WTC11 (cell line): ENCODE measurements at regions of chr11 and their contacts with region 1.

Region 1: DNA sequence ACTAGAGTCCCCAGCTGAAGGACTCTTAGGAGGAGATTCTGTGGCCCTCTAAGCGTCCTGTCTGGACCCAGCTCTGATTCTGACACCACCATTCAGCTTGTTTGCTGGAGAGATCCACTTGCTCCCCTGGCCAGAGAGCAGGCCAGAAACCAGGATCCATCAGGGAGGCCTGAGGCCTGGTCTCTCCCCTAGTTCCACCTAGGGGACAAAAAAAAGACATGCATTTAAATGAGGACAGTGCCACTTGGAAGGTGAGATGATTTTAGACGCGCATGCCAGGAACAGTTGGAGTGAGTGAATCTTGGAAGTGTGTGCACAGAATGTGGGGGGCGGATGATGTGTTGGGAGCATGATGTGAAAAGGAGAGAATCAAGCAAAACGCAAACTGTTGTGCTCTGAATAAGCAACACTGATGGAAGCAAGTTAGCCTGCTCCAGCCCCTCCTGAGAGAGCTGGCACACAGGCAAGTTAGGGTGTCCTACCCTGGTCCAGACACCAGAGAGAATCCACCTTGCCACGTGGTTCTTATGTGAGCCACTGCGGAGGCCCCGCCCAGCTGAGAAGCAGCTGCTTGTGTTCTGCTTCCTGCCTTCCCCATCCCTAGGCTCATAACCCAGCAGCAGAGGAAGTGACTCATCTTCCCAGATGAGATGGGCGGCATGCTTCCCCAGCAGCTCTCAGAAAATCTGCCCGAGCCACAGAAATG is 8.0 kb upstream of the SLCO2B1 start:
- DNase-seq: no peak
- ATAC-seq: peak; percentile 60
- H3K4me3 Mint-ChIP-seq: no peak overlapping the region
- H3K27ac Mint-ChIP-seq: no peak overlapping the region
- H3K4me1 Mint-ChIP-seq: peaks cover 8% of the 10 kb centered on the region
- H3K27me3 Mint-ChIP-seq: peaks cover 6% of the 10 kb centered on the region
- CTCF ChIP-seq: no peak

Region 2: DNA sequence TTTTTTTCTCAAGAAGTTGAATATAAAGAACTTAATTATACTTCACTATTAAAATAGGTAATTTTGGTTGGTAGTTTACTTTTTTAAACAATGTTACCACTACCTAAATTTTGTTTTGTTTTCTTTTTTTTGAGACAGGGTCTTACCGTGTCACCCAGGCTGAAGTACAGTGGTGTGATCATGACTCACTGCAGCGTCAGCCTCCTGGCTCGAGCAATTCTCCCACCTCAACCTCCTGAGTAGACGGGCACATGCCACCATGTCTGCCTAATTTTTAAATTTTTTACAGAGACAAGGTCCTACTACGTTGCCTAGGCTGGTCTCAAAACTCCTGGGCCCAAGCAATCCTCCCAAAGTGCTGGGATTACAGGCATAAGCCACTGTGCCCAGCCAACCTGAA is 176.2 kb before region 1 on chr11:
- CTCF ChIA-PET with region 1: no interaction called
- POLR2A ChIA-PET with region 1: no interaction called
- DNase-seq: no peak
- ATAC-seq: no peak
- H3K4me3 Mint-ChIP-seq: no peak overlapping the region
- H3K27ac Mint-ChIP-seq: no peak overlapping the region
- H3K4me1 Mint-ChIP-seq: 0 out of 2 replicates have a peak, but pooled peaks cover 3% of the 10 kb centered on the region
- H3K27me3 Mint-ChIP-seq: no peaks in the 10 kb centered on the region
- CTCF ChIP-seq: no peak

Region 3: GRCh38 chr11:75022759-75023396 is 120.0 kb before region 1 on chr11:
- CTCF ChIA-PET with region 1: interaction called, 54 read pairs
- POLR2A ChIA-PET with region 1: no interaction called
- DNase-seq: peak; percentile 91
- ATAC-seq: peak; percentile 99
- H3K4me3 Mint-ChIP-seq: no peak overlapping the region
- H3K27ac Mint-ChIP-seq: no peak overlapping the region
- H3K4me1 Mint-ChIP-seq: no peaks in the 10 kb centered on the region
- H3K27me3 Mint-ChIP-seq: peaks cover 4% of the 10 kb centered on the region
- CTCF ChIP-seq: peak; percentile 97

Region 4: GRCh38 chr11:75174781-75175370 is 32.0 kb after region 1 on chr11:
- CTCF ChIA-PET with region 1: interaction called, 16 read pairs
- POLR2A ChIA-PET with region 1: no interaction called
- DNase-seq: no peak
- ATAC-seq: no peak; the same call in 1 of the 2 replicates
- H3K4me3 Mint-ChIP-seq: no peak overlapping the region
- H3K27ac Mint-ChIP-seq: no peak overlapping the region
- H3K4me1 Mint-ChIP-seq: peaks cover 11% of the 10 kb centered on the region
- H3K27me3 Mint-ChIP-seq: no peaks in the 10 kb centered on the region
- CTCF ChIP-seq: no peak

Region 5: GRCh38 chr11:75204685-75205563 is 62.1 kb after region 1 on chr11:
- CTCF ChIA-PET with region 1: interaction called, 590 read pairs
- POLR2A ChIA-PET with region 1: interaction called, 3 read pairs
- DNase-seq: peak; percentile 94
- ATAC-seq: peak; percentile 95
- H3K4me3 Mint-ChIP-seq: no peak overlapping the region
- H3K27ac Mint-ChIP-seq: no peak overlapping the region
- H3K4me1 Mint-ChIP-seq: peaks cover 28% of the 10 kb centered on the region
- H3K27me3 Mint-ChIP-seq: no peaks in the 10 kb centered on the region; the same call in 1 of the 2 replicates
- CTCF ChIP-seq: peak; percentile 95

Region 6: DNA sequence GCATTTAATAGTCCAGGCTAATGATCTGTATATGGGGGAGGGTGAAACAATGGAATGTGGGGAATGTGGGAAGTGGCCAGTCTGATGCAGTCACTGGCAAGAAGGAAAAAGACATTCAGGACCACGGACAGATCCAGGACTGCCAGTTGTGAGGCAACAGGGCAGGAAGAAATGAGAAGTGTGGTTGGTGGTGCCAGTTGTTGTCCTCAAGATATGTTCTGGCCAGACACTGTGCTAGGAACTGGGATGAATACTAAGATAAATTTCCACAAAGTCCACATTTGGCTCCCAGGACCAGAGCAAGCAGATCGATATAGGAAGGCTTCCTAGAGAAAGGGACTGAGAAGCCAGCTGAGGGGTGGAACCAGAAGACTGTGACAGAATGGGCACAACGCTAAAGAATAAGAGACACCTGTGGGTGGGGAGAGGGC is 90.9 kb after region 1 on chr11:
- CTCF ChIA-PET with region 1: interaction called, 191 read pairs
- POLR2A ChIA-PET with region 1: no interaction called
- DNase-seq: peak; percentile 71
- ATAC-seq: peak; percentile 88
- H3K4me3 Mint-ChIP-seq: no peak overlapping the region
- H3K27ac Mint-ChIP-seq: no peak overlapping the region
- H3K4me1 Mint-ChIP-seq: peaks cover 14% of the 10 kb centered on the region
- H3K27me3 Mint-ChIP-seq: peaks cover 16% of the 10 kb centered on the region
- CTCF ChIP-seq: no peak

Region 7: DNA sequence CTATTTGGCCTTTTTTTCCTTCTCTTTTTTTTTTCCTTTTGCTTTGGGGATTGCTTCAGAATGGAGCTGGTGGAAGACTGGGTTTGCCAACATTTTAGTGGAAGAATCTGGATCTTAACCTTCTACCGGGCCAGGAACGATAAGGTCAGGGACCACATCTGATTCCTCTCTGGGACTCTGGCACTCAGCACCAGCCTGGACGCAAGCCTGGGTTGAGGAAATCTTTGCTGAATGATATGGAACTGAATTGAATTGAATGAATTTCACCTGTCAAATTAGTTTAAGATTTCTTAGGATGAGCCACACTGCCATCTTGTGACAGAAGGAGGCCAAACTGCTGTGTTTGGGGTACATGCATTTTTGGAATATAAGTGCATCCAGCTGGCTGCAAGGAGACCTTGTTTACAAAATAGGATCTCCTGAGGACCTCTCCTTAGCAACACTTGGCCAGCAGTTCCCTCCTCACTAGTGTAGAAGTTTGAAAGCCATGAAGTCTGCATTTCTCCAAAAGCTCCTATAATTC is 128.1 kb after region 1 on chr11:
- CTCF ChIA-PET with region 1: interaction called, 21 read pairs
- POLR2A ChIA-PET with region 1: no interaction called
- DNase-seq: no peak
- ATAC-seq: peak; percentile 19; the same call in 1 of the 2 replicates
- H3K4me3 Mint-ChIP-seq: no peak overlapping the region
- H3K27ac Mint-ChIP-seq: 0 out of 2 replicates have a peak overlapping the region, but pooled peaks have one; percentile 75
- H3K4me1 Mint-ChIP-seq: peaks cover 12% of the 10 kb centered on the region
- H3K27me3 Mint-ChIP-seq: no peaks in the 10 kb centered on the region
- CTCF ChIP-seq: no peak

Region 8: DNA sequence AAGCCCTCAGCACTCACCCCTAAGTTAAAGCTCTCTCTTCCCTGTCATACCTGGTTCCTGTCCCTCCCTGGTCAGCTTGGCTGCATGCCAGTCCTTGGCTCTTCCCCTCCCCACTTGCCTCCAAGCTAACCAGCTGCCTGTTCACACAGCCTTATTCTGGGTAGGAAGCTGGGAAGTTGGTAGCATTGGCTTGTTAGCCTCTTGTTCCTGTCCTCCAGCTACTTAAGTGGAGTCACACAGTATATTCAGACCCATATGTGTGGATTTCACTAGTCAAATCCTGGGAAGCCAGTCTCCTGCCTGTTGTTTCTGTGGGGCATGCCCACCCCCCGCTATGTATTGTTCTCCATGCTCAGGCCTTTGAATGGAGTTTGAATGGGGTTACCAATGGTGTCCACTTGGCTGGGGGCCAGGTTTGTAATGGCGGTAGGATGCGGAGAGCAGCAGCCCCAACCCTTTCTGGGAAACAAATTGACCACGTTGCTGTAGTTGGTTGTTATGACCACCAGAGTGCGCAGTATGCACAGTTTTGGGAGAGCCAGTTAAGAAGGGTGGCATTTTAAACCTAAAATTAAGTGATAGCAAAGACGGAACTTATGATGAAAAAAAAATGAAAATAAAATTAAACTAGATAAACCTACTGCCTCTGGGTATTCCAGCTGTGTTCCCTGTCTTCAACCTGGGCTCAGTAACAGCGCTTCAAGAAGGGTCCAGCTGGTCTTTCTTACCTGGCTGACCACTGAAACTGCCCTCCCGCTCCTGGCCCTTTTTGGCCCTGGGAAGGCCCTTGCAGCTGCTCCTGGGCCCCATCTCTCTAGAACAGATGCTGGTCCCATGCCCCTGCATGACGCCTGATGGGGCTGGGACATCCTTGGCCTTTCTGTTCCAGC is 245.8 kb after region 1 on chr11:
- CTCF ChIA-PET with region 1: no interaction called
- POLR2A ChIA-PET with region 1: no interaction called
- DNase-seq: peak; percentile 75
- ATAC-seq: peak; percentile 78
- H3K4me3 Mint-ChIP-seq: no peak overlapping the region
- H3K27ac Mint-ChIP-seq: no peak overlapping the region
- H3K4me1 Mint-ChIP-seq: peaks cover 20% of the 10 kb centered on the region
- H3K27me3 Mint-ChIP-seq: peaks cover 2% of the 10 kb centered on the region; the same call in 1 of the 2 replicates
- CTCF ChIP-seq: peak; percentile 69